ENCODE measurements at regions of chr10 and their contacts with region 1.

Region 1: GRCh38 chr10:28906934-28907333 is 229.6 kb downstream of the BAMBI start:
- DNase-seq: no peak
- H3K4me3 ChIP-seq: no peak overlapping the region
- H3K4me3 Mint-ChIP-seq: no peak overlapping the region
- H3K27ac Mint-ChIP-seq: no peak overlapping the region
- H3K4me1 ChIP-seq: peaks cover 36% of the 10 kb centered on the region
- H3K4me1 Mint-ChIP-seq: peaks cover 21% of the 10 kb centered on the region
- H3K27me3 ChIP-seq: no peaks in the 10 kb centered on the region
- H3K27me3 Mint-ChIP-seq: no peaks in the 10 kb centered on the region
- CTCF ChIP-seq: no peak

Region 2: DNA sequence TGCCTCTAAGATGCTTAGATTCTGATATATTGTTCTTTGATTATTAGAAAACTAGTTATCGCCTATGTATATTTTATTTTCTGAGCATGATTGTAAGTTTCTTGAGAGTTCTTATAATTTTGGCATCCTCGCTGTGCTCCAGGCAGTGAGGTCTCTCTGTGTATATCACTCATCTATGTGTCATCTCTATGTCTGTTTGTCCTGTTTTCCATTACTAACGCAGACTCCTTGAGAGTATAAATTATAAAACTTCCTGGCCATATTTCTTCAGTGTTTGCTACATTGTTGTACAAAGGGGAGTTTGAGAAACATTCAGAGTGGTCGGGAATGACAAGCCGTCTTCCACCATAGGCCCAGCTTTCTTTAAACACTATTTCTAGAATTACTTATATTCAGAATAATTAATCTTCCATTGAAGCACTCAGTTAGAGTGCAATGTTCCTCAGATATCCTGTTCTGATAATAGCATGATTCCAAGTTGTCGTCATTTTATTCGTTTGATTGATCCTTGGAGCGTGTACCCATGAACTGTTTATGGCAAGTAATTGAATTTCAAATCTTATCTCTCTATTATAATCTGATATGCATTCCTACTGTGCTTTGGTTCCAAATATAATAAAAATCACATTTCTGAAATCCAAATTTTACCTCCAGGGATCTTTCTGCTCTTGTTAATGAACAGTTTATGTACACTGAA is 23.0 kb before region 1 on chr10:
- CTCF ChIA-PET with region 1: no interaction called
- POLR2A ChIA-PET with region 1: no interaction called
- intact Hi-C with region 1: loop called (anchors 1 kb)
- DNase-seq: no peak
- H3K4me3 ChIP-seq: no peak overlapping the region
- H3K4me3 Mint-ChIP-seq: no peak overlapping the region
- H3K27ac Mint-ChIP-seq: peak overlapping the region; percentile 35
- H3K4me1 ChIP-seq: peaks cover 44% of the 10 kb centered on the region
- H3K4me1 Mint-ChIP-seq: peaks cover 52% of the 10 kb centered on the region
- H3K27me3 ChIP-seq: no peaks in the 10 kb centered on the region
- H3K27me3 Mint-ChIP-seq: no peaks in the 10 kb centered on the region
- CTCF ChIP-seq: no peak

Region 3: DNA sequence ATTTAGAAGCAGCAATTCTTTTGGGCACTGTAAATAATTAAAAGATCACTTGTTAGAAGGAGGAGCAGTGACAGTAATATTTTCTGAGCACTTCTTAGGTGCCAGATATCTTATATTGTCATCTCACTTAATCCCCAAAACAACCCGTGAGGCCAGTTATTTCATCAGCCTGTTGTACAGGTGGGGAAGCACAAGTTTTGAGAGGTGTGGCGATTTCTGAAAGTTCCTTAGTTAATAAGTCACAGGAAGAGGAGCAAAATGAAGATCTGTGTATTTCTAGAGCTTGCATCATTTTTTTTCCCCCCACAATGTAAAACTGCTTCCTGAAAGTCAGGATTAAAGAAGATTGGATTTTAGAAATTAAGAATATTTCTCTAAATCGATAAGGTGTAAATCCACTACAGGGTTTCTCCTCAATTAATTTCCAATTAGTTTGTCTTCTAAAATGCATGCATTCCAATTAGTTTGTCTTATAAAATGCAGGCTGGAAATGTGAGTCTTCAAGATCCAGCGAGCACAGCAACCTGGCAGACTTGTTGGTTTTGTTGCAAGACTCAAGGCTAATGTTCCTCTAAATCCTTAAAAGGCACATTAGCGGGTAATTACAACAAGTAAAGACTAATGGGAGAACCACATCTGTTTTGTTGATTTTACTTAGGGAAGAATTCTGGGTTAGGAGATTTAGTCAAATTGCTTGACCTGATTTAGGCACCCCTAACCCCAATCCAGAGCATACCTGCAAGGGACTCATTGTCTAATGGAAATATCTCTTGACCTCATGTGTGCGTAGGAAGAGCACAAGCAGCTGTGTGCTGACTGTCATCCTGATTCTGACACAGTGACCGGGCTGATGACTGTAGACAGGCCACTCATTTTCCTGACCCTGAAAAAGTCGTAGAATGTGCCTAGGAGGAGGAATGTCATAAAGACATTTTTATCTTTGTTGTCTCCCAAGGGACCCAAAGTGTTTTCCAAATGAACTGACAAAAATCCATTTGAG is 42.4 kb after region 1 on chr10:
- CTCF ChIA-PET with region 1: no interaction called
- POLR2A ChIA-PET with region 1: no interaction called
- intact Hi-C with region 1: loop called (anchors 2 kb)
- DNase-seq: peak; percentile 71 to 90
- H3K4me3 ChIP-seq: no peak overlapping the region
- H3K4me3 Mint-ChIP-seq: peak overlapping the region; percentile 65
- H3K27ac Mint-ChIP-seq: peak overlapping the region; percentile 99
- H3K4me1 ChIP-seq: peaks cover 24% of the 10 kb centered on the region
- H3K4me1 Mint-ChIP-seq: peaks cover 68% of the 10 kb centered on the region
- H3K27me3 ChIP-seq: no peaks in the 10 kb centered on the region
- H3K27me3 Mint-ChIP-seq: no peaks in the 10 kb centered on the region
- CTCF ChIP-seq: no peak

Region 4: DNA sequence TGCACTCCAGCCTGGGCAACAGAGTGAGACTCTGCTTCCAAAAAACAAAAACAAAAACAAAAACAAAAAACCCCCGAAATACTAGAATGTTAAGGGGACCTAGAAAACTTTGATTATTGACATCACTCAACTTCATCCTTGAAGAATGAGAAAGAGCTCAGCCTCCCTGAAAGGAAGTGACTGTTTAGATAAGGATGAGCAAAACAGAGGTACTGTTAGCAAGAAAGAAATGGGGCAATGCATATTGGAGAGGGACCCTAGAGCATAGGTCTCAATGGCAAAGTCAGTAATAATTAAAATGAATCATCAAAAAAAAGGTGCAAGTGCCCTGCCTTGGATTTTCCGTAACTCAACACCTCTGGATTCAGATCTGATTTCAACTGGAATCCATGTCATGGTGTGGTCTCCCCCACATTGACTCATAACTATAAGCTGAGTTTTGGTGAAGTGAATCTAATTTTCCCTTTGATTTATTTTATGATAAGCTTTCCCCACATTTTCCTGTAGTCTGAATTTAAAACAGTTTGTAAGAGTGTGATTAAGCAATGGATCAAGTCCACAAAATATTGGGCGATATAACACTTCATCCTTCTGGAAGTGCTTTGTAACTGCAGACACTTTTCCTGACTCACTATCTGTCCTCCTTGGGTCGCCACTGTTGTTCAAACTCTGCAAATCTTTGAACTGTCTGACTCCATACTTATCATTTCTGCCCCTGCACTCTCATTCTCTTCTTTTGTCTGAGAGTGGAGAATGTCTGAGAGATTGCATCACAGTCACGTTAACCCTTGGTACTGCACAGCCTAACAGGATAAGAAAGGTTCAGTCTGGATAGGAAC is 157.1 kb after region 1 on chr10:
- CTCF ChIA-PET with region 1: no interaction called
- POLR2A ChIA-PET with region 1: no interaction called
- intact Hi-C with region 1: loop called (anchors 1 kb)
- DNase-seq: peak; percentile 87 to 89
- H3K4me3 ChIP-seq: 0 out of 2 replicates have a peak overlapping the region, but pooled peaks have one; percentile 14
- H3K4me3 Mint-ChIP-seq: peak overlapping the region; percentile 32
- H3K27ac Mint-ChIP-seq: peak overlapping the region; percentile 68
- H3K4me1 ChIP-seq: peaks cover 60% of the 10 kb centered on the region
- H3K4me1 Mint-ChIP-seq: peaks cover 41% of the 10 kb centered on the region
- H3K27me3 ChIP-seq: no peaks in the 10 kb centered on the region
- H3K27me3 Mint-ChIP-seq: no peaks in the 10 kb centered on the region
- CTCF ChIP-seq: peak; percentile 19 to 47

Measured in Caco-2 (cell line).